T-cell (primary cell): ENCODE measurements at regions of chr4 and their contacts with region 1.

Region 1: GRCh38 chr4:159248384-159249178 is 145.7 kb downstream of the RAPGEF2 start:
- DNase-seq: no peak
- ATAC-seq: no peak
- H3K4me3 ChIP-seq: no peak overlapping the region
- H3K4me3 Mint-ChIP-seq: peak overlapping the region in 1 of 3 donors; percentile 11
- H3K27ac ChIP-seq: no peak overlapping the region
- H3K27ac Mint-ChIP-seq: peak overlapping the region in 1 of 2 donors; percentile 44
- H3K4me1 ChIP-seq: no peaks in the 10 kb centered on the region
- H3K4me1 Mint-ChIP-seq: peaks cover 10 to 21% (median 17%) of the 10 kb centered on the region in 3 donors
- H3K27me3 ChIP-seq: no peaks in the 10 kb centered on the region
- H3K27me3 Mint-ChIP-seq: no peaks in the 10 kb centered on the region

Region 2: GRCh38 chr4:159142241-159142640 is 106.3 kb before region 1 on chr4:
- CTCF ChIA-PET with region 1: interaction called in 1 of 2 experiments, 11 read pairs
- POLR2A ChIA-PET with region 1: no interaction called
- DNase-seq: no peak
- ATAC-seq: no peak
- H3K4me3 ChIP-seq: no peak overlapping the region
- H3K4me3 Mint-ChIP-seq: no peak overlapping the region
- H3K27ac ChIP-seq: no peak overlapping the region
- H3K27ac Mint-ChIP-seq: no peak overlapping the region
- H3K4me1 ChIP-seq: no peaks in the 10 kb centered on the region
- H3K4me1 Mint-ChIP-seq: peaks cover 7 to 22% (median 22%) of the 10 kb centered on the region in 3 donors
- H3K27me3 ChIP-seq: no peaks in the 10 kb centered on the region
- H3K27me3 Mint-ChIP-seq: no peaks in the 10 kb centered on the region

Region 3: GRCh38 chr4:159258889-159259560 is 10.4 kb after region 1 on chr4:
- CTCF ChIA-PET with region 1: no interaction called
- POLR2A ChIA-PET with region 1: no interaction called
- DNase-seq: no peak
- ATAC-seq: no peak
- H3K4me3 ChIP-seq: no peak overlapping the region
- H3K4me3 Mint-ChIP-seq: no peak overlapping the region
- H3K27ac ChIP-seq: no peak overlapping the region
- H3K27ac Mint-ChIP-seq: no peak overlapping the region
- H3K4me1 ChIP-seq: no peaks in the 10 kb centered on the region
- H3K4me1 Mint-ChIP-seq: peaks cover 0 to 3% (median 0%) of the 10 kb centered on the region in 3 donors
- H3K27me3 ChIP-seq: no peaks in the 10 kb centered on the region
- H3K27me3 Mint-ChIP-seq: no peaks in the 10 kb centered on the region

Region 4: GRCh38 chr4:159366966-159367780 is 118.6 kb after region 1 on chr4:
- CTCF ChIA-PET with region 1: no interaction called
- POLR2A ChIA-PET with region 1: no interaction called
- DNase-seq: no peak
- ATAC-seq: no peak
- H3K4me3 ChIP-seq: no peak overlapping the region
- H3K4me3 Mint-ChIP-seq: no peak overlapping the region
- H3K27ac ChIP-seq: no peak overlapping the region
- H3K27ac Mint-ChIP-seq: no peak overlapping the region
- H3K4me1 ChIP-seq: no peaks in the 10 kb centered on the region
- H3K4me1 Mint-ChIP-seq: no peaks in the 10 kb centered on the region
- H3K27me3 ChIP-seq: peaks cover 0 to 12% of the 10 kb centered on the region in 2 experiments
- H3K27me3 Mint-ChIP-seq: peaks cover 15 to 25% of the 10 kb centered on the region in 2 donors

Region 5: GRCh38 chr4:159390648-159391047 is 142.1 kb after region 1 on chr4:
- CTCF ChIA-PET with region 1: no interaction called
- POLR2A ChIA-PET with region 1: no interaction called
- DNase-seq: no peak
- ATAC-seq: no peak
- H3K4me3 ChIP-seq: no peak overlapping the region
- H3K4me3 Mint-ChIP-seq: no peak overlapping the region
- H3K27ac ChIP-seq: no peak overlapping the region
- H3K27ac Mint-ChIP-seq: no peak overlapping the region
- H3K4me1 ChIP-seq: no peaks in the 10 kb centered on the region
- H3K4me1 Mint-ChIP-seq: peaks cover 0 to 5% (median 2%) of the 10 kb centered on the region in 3 donors
- H3K27me3 ChIP-seq: peaks cover 0 to 7% of the 10 kb centered on the region in 2 experiments
- H3K27me3 Mint-ChIP-seq: peaks cover 8 to 11% of the 10 kb centered on the region in 2 donors